GM13977 (cell line): ENCODE measurements at regions of chr21 and their contacts with region 1.

Region 1: GRCh38 chr21:36698981-36699891 is at the start of gene SIM2:
- DNase-seq: peak; percentile 54
- CTCF ChIP-seq: no peak

Region 2: GRCh38 chr21:36141513-36141925 is 557.7 kb before region 1 on chr21:
- in situ Hi-C with region 1: loop called (anchors 25 kb)
- DNase-seq: peak; percentile 74
- CTCF ChIP-seq: peak; percentile 89

Region 3: DNA sequence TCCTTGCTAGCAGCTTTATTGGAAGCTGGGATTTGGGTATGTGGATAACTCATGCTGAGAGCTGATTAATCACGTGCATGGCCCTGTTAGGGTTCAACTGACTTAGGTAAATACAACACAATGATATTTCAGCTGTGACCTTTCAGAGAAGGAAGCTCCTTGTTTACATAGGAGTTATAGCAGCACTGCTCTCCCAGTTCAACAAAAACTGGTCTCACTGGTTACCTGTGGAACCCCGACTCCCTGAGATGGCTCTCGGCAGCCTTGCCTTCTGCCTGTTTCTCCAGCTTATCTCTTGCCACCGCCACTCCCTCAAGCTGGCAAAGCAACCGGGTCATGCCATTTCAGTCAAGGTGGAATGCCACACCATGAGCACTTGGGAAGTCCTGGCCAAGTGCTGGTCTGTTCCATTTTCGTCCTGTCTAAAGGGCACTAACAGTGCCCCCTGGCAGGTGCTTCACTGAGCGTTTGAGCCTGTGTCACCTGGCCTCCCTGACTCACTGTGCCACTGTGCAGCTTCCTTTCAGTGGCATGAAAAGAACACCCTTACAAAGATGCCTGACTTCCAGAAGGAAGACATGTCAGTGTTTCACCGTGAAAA is 511.1 kb before region 1 on chr21:
- in situ Hi-C with region 1: no loop called
- DNase-seq: no peak
- CTCF ChIP-seq: no peak